ENCODE measurements at regions of chr12 and their contacts with region 1.

Region 1: DNA sequence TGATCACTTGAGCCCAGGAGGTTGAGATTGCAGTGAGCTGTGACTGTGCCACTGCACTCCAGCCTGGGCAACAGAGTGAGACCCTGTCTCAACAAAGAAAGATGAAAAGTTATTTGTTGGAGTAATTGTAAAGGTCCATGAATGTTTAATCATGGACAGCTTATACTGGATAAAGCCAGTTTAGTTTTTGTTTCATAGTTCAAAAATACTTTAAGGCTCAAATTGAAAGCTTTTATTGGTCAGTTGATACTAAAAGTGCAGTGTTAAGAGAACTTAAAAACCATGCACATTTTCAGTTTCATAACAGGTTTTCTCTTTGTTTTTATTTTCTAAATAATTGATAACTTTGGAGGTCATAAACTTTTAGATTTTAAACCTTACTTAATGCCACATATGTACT is 108.4 kb downstream of the MON2 start:
- DNase-seq: no peak
- H3K4me3 ChIP-seq: no peak overlapping the region
- H3K27ac ChIP-seq: no peak overlapping the region
- H3K4me1 ChIP-seq: no peaks in the 10 kb centered on the region
- H3K27me3 ChIP-seq: no peaks in the 10 kb centered on the region
- CTCF ChIP-seq: no peak
- EP300 ChIP-seq: no peak
- POLR2A ChIP-seq: no peak

Region 2: GRCh38 chr12:61282790-61283575 is 1292.1 kb before region 1 on chr12:
- intact Hi-C with region 1: loop called in 1 of 4 experiments (anchors 10 kb)
- DNase-seq: no peak
- H3K4me3 ChIP-seq: no peak overlapping the region
- H3K27ac ChIP-seq: no peak overlapping the region
- H3K4me1 ChIP-seq: no peaks in the 10 kb centered on the region
- H3K27me3 ChIP-seq: peaks cover 2% of the 10 kb centered on the region
- CTCF ChIP-seq: no peak
- EP300 ChIP-seq: no peak
- POLR2A ChIP-seq: no peak

Region 3: DNA sequence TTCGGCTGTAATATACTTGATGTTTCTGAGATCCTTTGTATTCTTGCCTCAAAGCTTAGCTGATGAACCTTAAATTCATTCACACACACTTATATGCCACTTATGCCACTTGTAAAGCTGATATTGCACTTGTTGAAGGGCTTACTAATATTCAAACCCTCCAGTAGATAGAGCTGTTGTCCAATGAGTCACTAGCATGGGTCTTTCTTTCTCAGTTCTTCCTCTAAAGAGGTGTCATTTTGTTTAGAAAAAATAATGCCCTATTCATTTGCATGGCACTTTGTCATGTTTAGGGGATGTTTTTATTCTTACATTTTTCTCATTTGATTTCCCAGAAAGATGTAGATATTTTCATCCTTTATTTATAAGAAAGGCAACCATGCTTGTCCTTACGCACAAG is 52.1 kb before region 1 on chr12:
- intact Hi-C with region 1: no loop called
- DNase-seq: no peak
- H3K4me3 ChIP-seq: no peak overlapping the region
- H3K27ac ChIP-seq: no peak overlapping the region
- H3K4me1 ChIP-seq: no peaks in the 10 kb centered on the region
- H3K27me3 ChIP-seq: no peaks in the 10 kb centered on the region
- CTCF ChIP-seq: no peak
- EP300 ChIP-seq: no peak
- POLR2A ChIP-seq: no peak